Activated naive CD4-positive, alpha-beta T cell treated with anti-CD3 and anti-CD28 coated beads for 36 hours (primary cell): ENCODE measurements at regions of chr19 and their contacts with region 1.

Region 1: DNA sequence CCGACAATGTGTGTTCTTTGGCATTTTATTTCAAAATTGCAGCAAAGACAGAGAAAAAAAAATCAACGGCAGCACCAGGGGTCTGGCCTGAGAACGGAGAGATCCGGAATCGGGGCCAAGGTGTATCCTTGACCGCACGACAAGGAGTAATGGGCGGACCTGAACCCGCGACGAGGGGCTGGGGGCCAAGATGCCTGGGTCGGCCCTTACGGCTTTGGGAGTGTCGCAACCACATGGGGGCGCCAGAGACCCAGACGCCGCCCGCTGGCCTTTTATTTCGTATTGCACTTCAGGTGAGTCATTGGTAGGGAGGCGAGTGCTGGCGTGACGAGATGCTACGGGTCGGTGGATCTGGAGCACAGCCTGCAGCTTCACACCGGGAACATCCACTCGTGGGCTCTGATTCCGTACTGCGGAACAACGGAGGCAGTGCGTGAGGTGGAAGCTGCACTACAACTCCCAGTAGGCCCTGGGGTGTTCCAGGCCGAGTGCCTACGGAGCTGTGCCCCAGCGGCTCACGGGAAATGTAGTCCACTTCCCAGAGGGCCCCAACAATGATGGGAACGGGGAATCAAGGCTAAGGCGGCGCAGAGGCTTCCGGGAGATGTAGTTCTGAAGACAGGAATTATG is 15.7 kb downstream of the BCAT2 start:
- DNase-seq: peak; percentile 89
- H3K4me3 Mint-ChIP-seq: peak overlapping the region; percentile 82
- H3K27ac Mint-ChIP-seq: peak overlapping the region; percentile 87
- H3K4me1 Mint-ChIP-seq: peaks cover 10% of the 10 kb centered on the region
- H3K27me3 Mint-ChIP-seq: no peaks in the 10 kb centered on the region

Region 2: GRCh38 chr19:48806518-48806817 is 11.3 kb after region 1 on chr19:
- CTCF ChIA-PET with region 1: interaction called, 14 read pairs
- intact Hi-C with region 1: loop called (anchors 2 kb)
- DNase-seq: peak; percentile 63
- H3K4me3 Mint-ChIP-seq: no peak overlapping the region
- H3K27ac Mint-ChIP-seq: no peak overlapping the region
- H3K4me1 Mint-ChIP-seq: peaks cover 21% of the 10 kb centered on the region
- H3K27me3 Mint-ChIP-seq: no peaks in the 10 kb centered on the region

Region 3: DNA sequence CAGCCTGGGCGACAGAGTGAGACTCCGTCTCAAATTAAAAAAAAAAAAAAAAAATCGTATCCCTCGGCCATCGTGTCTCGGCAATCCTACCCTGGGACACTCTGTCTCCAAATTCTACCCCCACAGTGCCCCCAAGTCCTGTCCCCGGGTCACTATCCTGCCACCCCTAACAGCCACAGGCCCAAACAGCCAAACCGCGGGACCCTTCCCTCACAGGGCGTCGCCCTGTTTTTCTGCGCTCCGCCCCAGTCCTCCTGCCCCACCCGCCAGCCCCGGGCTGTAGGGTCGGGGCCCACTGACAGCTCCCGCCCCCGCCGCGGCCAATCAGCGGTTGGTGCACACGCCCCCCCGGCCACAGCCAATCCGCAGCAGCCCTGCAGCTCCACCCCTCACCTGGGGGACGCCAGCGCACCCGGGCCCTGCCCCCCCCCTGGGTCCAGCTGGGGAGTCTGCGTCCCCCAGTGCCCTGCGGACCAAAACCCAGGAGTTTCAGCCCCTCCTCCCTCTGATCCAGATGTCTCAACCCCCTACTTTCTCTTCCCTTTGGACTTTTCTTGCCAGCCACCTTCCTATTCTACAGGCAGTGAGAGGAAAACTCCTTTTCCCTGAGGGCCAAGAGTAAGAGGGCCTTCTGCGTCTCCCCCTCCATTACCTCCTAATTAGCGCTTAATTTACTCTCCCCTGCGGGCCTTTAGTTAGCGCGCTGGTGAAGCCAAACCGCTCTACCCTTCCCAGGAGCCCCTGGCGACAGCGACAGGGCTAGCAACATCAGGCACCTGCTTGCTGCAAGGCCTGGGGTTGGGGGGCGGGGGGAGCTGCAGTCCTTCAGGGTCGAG is 17.1 kb after region 1 on chr19:
- CTCF ChIA-PET with region 1: interaction called, 14 read pairs
- intact Hi-C with region 1: loop called (anchors 2 kb)
- DNase-seq: peak; percentile 52
- H3K4me3 Mint-ChIP-seq: peak overlapping the region; percentile 68
- H3K27ac Mint-ChIP-seq: no peak overlapping the region
- H3K4me1 Mint-ChIP-seq: peaks cover 31% of the 10 kb centered on the region
- H3K27me3 Mint-ChIP-seq: no peaks in the 10 kb centered on the region

Region 4: DNA sequence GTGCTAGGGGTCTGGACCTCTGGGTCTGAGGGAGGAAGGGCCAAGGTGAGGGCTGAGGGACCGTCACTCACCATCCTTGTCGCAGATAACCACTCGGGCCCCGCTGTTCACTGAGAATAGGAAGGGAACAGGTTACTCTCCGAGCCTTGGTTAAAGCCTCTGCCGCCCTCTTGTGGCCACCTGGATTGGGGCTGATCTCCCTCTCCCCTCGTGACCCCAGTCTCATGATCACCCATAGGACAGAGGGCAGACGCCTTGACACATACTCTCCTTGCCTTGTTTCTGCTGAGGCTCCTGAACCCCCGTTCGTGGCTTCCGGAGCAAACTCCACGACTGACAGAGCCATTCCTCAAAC is 40.5 kb after region 1 on chr19:
- CTCF ChIA-PET with region 1: interaction called, 121 read pairs
- intact Hi-C with region 1: loop called (anchors 1 kb)
- DNase-seq: peak; percentile 98
- H3K4me3 Mint-ChIP-seq: peak overlapping the region; percentile 73
- H3K27ac Mint-ChIP-seq: no peak overlapping the region
- H3K4me1 Mint-ChIP-seq: peaks cover 20% of the 10 kb centered on the region
- H3K27me3 Mint-ChIP-seq: peaks cover 2% of the 10 kb centered on the region

Region 5: GRCh38 chr19:48842789-48843162 is 47.6 kb after region 1 on chr19:
- CTCF ChIA-PET with region 1: interaction called, 121 read pairs
- intact Hi-C with region 1: loop called (anchors 1 kb)
- DNase-seq: peak; percentile 70
- H3K4me3 Mint-ChIP-seq: no peak overlapping the region
- H3K27ac Mint-ChIP-seq: no peak overlapping the region
- H3K4me1 Mint-ChIP-seq: no peaks in the 10 kb centered on the region
- H3K27me3 Mint-ChIP-seq: no peaks in the 10 kb centered on the region

Region 6: GRCh38 chr19:49085020-49085867 is 290.1 kb after region 1 on chr19 and contains the start of gene SNRNP70:
- CTCF ChIA-PET with region 1: no interaction called
- intact Hi-C with region 1: loop called (anchors 5 kb)
- DNase-seq: peak; percentile 99
- H3K4me3 Mint-ChIP-seq: peak within 1 kb of the TSS; percentile 96
- H3K27ac Mint-ChIP-seq: peak within 1 kb of the TSS; percentile 93
- H3K4me1 Mint-ChIP-seq: peaks cover 31% of the 10 kb centered on the region
- H3K27me3 Mint-ChIP-seq: no peaks in the 10 kb centered on the region
- total RNA-seq, gene SNRNP70: 163 to 166 TPM